Activated CD4-positive, alpha-beta memory T cell treated with anti-CD3 and anti-CD28 coated beads for 36 hours (primary cell): ENCODE measurements at regions of chr4 and their contacts with region 1.

Region 1: GRCh38 chr4:83548151-83548905 is 12.4 kb downstream of the GPAT3 start:
- DNase-seq: peak; percentile 90
- H3K4me3 Mint-ChIP-seq: no peak overlapping the region
- H3K27ac Mint-ChIP-seq: peak overlapping the region; percentile 25
- H3K4me1 Mint-ChIP-seq: peaks cover 20% of the 10 kb centered on the region
- H3K27me3 Mint-ChIP-seq: no peaks in the 10 kb centered on the region

Region 2: GRCh38 chr4:83535520-83536361 is 12.6 kb before region 1 on chr4 and contains the start of gene GPAT3:
- CTCF ChIA-PET with region 1: interaction called, 6 read pairs
- POLR2A ChIA-PET with region 1: interaction called, 6 read pairs
- intact Hi-C with region 1: loop called (anchors 1 kb)
- DNase-seq: peak; percentile 84
- H3K4me3 Mint-ChIP-seq: peak within 1 kb of the TSS; percentile 83
- H3K27ac Mint-ChIP-seq: peak within 1 kb of the TSS; percentile 44
- H3K4me1 Mint-ChIP-seq: peaks cover 16% of the 10 kb centered on the region
- H3K27me3 Mint-ChIP-seq: peaks cover 12% of the 10 kb centered on the region
- total RNA-seq, gene GPAT3: 4.2 to 7.2 TPM

Region 3: GRCh38 chr4:83558680-83559079 is 10.4 kb after region 1 on chr4:
- CTCF ChIA-PET with region 1: no interaction called
- POLR2A ChIA-PET with region 1: no interaction called
- intact Hi-C with region 1: loop called (anchors 1 kb)
- DNase-seq: no peak
- H3K4me3 Mint-ChIP-seq: no peak overlapping the region
- H3K27ac Mint-ChIP-seq: no peak overlapping the region
- H3K4me1 Mint-ChIP-seq: peaks cover 15% of the 10 kb centered on the region
- H3K27me3 Mint-ChIP-seq: no peaks in the 10 kb centered on the region